CD4-positive, alpha-beta memory T cell (primary cell): ENCODE measurements at regions of chr17 and their contacts with region 1.

Region 1: GRCh38 chr17:57987580-57988421 is at the start of gene VEZF1:
- DNase-seq: peak; percentile 75 to 84 (median 80)
- H3K4me3 ChIP-seq: peak within 1 kb of the TSS; percentile 62 to 89
- H3K4me3 Mint-ChIP-seq: peak within 1 kb of the TSS; percentile 94 to 97 (median 96)
- H3K27ac ChIP-seq: peak within 1 kb of the TSS; percentile 76
- H3K27ac Mint-ChIP-seq: peak within 1 kb of the TSS; percentile 94 to 98 (median 97)
- H3K4me1 ChIP-seq: peaks cover 55% of the 10 kb centered on the region
- H3K4me1 Mint-ChIP-seq: peaks cover 46 to 69% (median 61%) of the 10 kb centered on the region in 4 donors
- H3K27me3 ChIP-seq: no peaks in the 10 kb centered on the region
- H3K27me3 Mint-ChIP-seq: no peaks in the 10 kb centered on the region
- total RNA-seq, gene VEZF1: 76.0 to 76.6 TPM

Region 2: DNA sequence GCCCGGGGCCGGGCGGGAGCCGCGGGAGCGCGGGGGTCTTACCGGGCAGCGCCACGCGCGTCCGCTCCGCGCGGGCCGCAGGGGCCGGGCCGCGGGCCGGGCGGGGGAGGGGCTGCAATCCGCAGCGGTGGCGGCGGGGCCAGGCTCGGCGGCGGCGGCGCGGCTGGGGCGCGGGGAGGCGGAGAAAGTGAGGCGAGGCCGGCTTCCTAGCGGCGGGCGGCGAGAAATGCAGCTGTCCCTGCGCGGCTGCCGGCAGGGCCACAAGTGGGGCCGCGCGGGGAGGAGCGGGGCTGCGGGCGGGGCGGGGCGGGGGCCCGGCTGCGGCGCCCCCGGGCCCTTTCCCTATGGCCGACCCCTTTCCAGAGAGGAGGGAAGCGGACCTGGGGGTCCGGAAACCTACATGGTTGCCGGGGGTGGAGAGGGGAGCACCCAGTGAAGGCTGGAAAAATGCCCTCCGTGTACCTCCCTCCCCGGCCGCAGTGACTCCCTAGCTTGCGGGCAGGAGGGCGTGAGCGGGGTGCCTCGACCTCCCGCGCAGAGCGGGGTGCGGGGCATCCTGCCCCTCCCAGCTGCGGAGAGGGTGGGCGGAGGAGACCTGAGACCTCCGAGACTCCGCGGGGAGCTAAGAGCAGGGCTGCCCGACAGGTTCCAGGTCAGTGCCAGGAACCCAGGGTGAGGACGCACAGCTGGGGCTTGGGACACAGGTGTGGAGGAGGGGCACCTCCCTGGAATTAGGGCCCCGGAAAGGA is 32.4 kb before region 1 on chr17 and contains the start of gene CUEDC1:
- CTCF ChIA-PET with region 1: interaction called, 4 read pairs
- POLR2A ChIA-PET with region 1: interaction called, 12 read pairs
- intact Hi-C with region 1: no loop called
- DNase-seq: peak; percentile 45 to 56 (median 54)
- H3K4me3 ChIP-seq: peak within 1 kb of the TSS; percentile 42 to 63
- H3K4me3 Mint-ChIP-seq: peak within 1 kb of the TSS; percentile 78 to 86 (median 82)
- H3K27ac ChIP-seq: no peak within 1 kb of the TSS
- H3K27ac Mint-ChIP-seq: peak within 1 kb of the TSS in 3 of 7 donors; percentile 8 to 79 (median 74)
- H3K4me1 ChIP-seq: peaks cover 15% of the 10 kb centered on the region
- H3K4me1 Mint-ChIP-seq: peaks cover 18 to 30% (median 22%) of the 10 kb centered on the region in 4 donors
- H3K27me3 ChIP-seq: peaks cover 4% of the 10 kb centered on the region
- H3K27me3 Mint-ChIP-seq: peaks cover 2 to 6% of the 10 kb centered on the region in 2 donors
- total RNA-seq, gene CUEDC1: 0.61 to 0.90 TPM